ENCODE measurements at regions of chr1 and their contacts with region 1.

Region 1: DNA sequence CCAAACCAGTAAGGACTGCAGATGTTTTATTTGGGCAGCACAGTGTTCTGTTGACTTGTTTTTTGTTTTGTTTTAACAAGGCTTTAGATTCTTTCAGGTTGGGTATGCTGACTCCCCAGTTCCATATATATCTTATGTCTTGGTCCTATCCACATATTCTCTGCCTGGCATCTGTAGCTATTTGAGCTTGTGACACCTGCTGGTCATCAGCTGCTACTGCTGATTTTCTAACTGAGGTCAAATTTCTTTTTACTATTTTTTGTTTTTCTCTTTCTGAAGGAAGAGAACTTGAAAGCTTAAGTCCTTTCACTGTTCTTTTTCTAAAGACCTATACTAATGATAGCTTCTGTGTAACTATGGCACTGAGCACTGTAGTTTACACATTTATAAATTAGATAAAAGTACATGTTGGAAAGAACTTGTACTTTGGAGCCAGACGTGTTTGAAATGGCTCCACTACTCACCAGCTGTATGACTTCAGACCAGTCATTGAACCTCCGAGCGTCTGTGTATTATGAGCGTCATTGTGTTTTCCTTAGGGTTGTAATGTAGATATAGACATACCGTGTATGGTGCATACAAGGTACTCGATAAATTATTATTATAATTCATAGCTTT is 109.4 kb downstream of the NRDC start:
- H3K4me3 Mint-ChIP-seq: no peak overlapping the region
- H3K27ac Mint-ChIP-seq: no peak overlapping the region
- H3K4me1 Mint-ChIP-seq: peaks cover 6% of the 10 kb centered on the region
- H3K27me3 Mint-ChIP-seq: no peaks in the 10 kb centered on the region

Region 2: DNA sequence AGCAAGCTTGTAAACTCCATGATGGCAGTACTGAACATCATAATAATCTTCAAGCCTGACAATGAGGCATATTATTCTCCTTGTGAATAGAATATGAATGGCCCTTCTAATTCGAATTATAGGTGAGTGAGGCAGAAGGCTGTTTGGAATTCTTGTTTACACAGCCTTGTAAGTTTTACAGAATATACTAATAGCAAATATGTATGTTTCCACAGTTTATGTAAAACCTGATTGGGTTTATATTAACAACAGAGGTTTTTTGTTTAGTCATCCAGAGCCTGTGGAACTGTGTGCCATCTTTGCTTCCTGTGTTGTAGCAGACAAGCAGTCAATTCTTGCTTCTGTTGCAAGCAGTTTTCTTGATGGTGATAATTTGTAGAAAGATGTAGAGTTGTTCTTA is 144.2 kb before region 1 on chr1:
- intact Hi-C with region 1: loop called (anchors 2 kb)
- H3K4me3 Mint-ChIP-seq: no peak overlapping the region
- H3K27ac Mint-ChIP-seq: no peak overlapping the region
- H3K4me1 Mint-ChIP-seq: peaks cover 32% of the 10 kb centered on the region
- H3K27me3 Mint-ChIP-seq: no peaks in the 10 kb centered on the region

Measured in dendritic cell treated with granulocyte-macrophage colony-stimulating factor and Interleukin-4, amounts not matched to agents 40 ng/mL and 50 ng/mL, for 4 days (primary cell).